ENCODE measurements at regions of chr11 and their contacts with region 1.

Region 1: DNA sequence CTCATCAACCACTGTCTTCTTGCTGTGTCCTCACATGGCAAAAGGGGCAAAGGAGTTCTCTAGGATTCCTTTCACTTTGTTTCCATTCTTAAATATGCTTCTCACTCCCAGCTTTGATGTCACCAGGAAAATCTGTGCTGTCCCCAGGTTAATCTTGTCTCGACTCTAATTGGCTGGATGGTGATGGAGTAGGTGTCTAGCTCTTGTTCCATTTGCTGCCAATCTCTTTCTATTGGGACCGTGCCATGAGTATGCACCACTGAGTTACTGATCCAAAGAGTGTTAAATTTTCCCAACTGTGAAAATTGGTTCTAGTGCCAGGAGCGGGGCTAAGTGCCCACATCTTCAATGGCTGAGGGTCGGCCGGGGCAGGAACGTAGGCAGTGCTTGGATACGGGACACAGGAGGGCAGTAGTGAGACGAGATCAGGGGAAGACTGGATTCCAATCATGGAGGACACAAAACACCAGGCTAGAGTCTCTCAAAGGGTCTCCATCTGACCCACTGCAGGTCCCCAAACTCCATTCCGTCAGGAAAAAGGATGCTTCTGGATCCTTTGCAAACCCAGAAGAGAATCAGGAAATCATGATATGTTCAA is 47.7 kb upstream of the CSNK2A3 start:
- DNase-seq: no peak
- ATAC-seq: peak in 2 of 4 donors; percentile 39 to 51
- H3K4me3 ChIP-seq: no peak overlapping the region
- H3K27ac ChIP-seq: no peak overlapping the region
- H3K4me1 ChIP-seq: peaks cover 3% of the 10 kb centered on the region
- H3K27me3 ChIP-seq: no peaks in the 10 kb centered on the region
- CTCF ChIP-seq: peak; percentile 17

Region 2: GRCh38 chr11:11691296-11692142 is 290.8 kb after region 1 on chr11:
- intact Hi-C with region 1: no loop called
- DNase-seq: no peak
- ATAC-seq: no peak
- H3K4me3 ChIP-seq: no peak overlapping the region
- H3K27ac ChIP-seq: no peak overlapping the region
- H3K4me1 ChIP-seq: no peaks in the 10 kb centered on the region
- H3K27me3 ChIP-seq: no peaks in the 10 kb centered on the region
- CTCF ChIP-seq: no peak

Region 3: DNA sequence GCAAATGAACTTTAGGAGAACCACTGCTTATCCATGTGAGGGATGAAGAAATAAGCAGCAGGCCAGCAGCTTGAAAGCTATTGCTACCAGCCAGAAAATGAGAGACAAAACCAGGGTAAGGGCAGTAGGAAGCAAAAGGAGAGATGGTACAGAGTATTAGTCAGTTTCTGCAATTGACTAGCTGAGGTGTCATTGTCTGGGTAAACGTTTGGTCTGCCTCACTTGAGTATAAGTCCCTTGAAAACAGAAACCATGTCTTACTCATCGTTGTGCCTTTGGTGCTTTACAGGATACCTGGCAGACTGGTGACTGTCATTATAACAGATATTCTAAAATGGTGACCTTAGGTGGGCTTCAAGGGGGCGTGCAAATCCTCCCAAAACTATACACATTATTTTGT is 377.2 kb after region 1 on chr11:
- intact Hi-C with region 1: loop called (anchors 10 kb)
- DNase-seq: no peak
- ATAC-seq: no peak
- H3K4me3 ChIP-seq: no peak overlapping the region
- H3K27ac ChIP-seq: no peak overlapping the region
- H3K4me1 ChIP-seq: no peaks in the 10 kb centered on the region
- H3K27me3 ChIP-seq: no peaks in the 10 kb centered on the region
- CTCF ChIP-seq: no peak

Measured in psoas muscle (tissue), 8 donors.